ENCODE measurements at regions of chr7 and their contacts with region 1.

Region 1: GRCh38 chr7:135170274-135170997 is at the start of gene CYREN:
- DNase-seq: peak; percentile 97
- ATAC-seq: peak; percentile 85
- H3K4me3 Mint-ChIP-seq: peak within 1 kb of the TSS; percentile 88
- H3K27ac Mint-ChIP-seq: peak within 1 kb of the TSS; percentile 96
- H3K4me1 Mint-ChIP-seq: peaks cover 50% of the 10 kb centered on the region
- H3K27me3 Mint-ChIP-seq: no peaks in the 10 kb centered on the region
- total RNA-seq, gene CYREN: 32.6 to 40.5 TPM

Region 2: GRCh38 chr7:135147899-135148721 is 22.3 kb before region 1 on chr7 and contains the start of gene TMEM140:
- CTCF ChIA-PET with region 1: interaction called, 12 read pairs
- POLR2A ChIA-PET with region 1: interaction called, 10 read pairs
- intact Hi-C with region 1: loop called (anchors 1 kb)
- DNase-seq: peak; percentile 75
- ATAC-seq: peak; percentile 81
- H3K4me3 Mint-ChIP-seq: peak within 1 kb of the TSS; percentile 79
- H3K27ac Mint-ChIP-seq: peak within 1 kb of the TSS; percentile 92
- H3K4me1 Mint-ChIP-seq: peaks cover 52% of the 10 kb centered on the region
- H3K27me3 Mint-ChIP-seq: no peaks in the 10 kb centered on the region
- total RNA-seq, gene TMEM140: 10.8 to 12.1 TPM

Region 3: DNA sequence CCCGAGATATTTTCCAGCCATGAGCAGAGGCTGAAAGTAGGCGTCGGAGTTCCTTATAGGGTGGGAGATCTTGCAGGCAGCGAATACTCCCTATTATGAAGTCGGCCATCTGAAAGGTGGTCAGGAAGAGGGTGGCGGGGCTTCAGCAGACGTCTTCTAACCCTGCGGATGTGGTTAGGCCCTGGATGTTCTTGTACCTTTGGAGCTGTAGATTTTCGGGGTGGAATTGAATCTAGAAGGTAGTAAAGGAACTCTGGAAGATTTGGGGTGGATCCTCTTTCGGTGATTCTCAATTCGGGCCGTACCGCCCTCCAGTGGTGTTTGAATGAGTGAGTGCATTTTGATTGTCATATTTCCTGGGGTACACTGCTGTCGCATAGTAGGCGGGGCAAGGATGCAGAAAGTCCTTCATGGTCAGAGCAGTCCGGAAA is 387.9 kb after region 1 on chr7:
- CTCF ChIA-PET with region 1: no interaction called
- POLR2A ChIA-PET with region 1: no interaction called
- intact Hi-C with region 1: loop called in 1 of 2 experiments (anchors 5 kb)
- DNase-seq: peak; percentile 78
- ATAC-seq: peak; percentile 73
- H3K4me3 Mint-ChIP-seq: no peak overlapping the region
- H3K27ac Mint-ChIP-seq: no peak overlapping the region
- H3K4me1 Mint-ChIP-seq: peaks cover 29% of the 10 kb centered on the region
- H3K27me3 Mint-ChIP-seq: no peaks in the 10 kb centered on the region